ENCODE measurements at regions of chr7 and their contacts with region 1.

Region 1: DNA sequence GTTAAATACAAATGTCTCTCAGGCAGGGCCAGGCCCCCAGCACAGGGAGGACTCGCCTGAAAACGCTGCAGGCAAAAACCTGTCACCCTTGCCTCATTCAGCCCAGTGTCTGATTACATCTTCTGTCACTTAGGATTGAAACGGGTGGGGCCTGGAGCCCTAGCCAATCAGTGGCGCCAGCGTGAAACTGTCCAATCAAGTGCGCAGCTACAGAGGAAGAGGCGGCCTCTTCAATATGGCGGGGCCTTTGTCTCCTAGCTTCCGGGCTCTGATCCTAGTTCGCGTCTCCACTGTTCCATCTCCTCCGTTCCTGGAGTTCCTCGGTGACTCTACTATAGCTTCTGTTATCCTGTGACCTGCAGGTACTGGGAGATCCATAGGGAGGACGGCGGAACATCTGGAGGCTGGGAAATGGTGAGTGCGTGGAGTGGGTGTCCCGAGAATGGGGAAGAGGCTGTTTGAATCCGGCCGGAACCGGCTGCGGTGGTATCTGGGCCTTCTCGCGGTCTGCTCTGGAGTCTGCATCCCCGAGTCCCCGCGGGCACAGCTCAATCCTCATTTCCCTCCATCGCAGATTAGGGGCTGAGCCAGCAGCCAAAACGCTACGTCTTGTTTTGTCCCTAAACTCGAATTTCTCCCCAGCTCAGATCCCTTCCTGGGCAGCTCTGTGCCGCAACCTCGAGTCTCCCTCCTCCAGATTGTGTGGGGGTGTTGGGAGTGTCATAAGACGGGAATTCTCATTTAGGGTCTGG is at the start of gene ZNF736:
- DNase-seq: peak; percentile 89
- H3K4me3 ChIP-seq: peak within 1 kb of the TSS; percentile 56 to 63
- H3K27ac ChIP-seq: peak within 1 kb of the TSS; percentile 66 to 78
- H3K4me1 ChIP-seq: no peaks in the 10 kb centered on the region
- H3K27me3 ChIP-seq: no peaks in the 10 kb centered on the region
- CTCF ChIP-seq: no peak
- POLR2A ChIP-seq: peak; percentile 58
- total RNA-seq, gene ZNF736: 12.4 to 23.4 TPM

Region 2: DNA sequence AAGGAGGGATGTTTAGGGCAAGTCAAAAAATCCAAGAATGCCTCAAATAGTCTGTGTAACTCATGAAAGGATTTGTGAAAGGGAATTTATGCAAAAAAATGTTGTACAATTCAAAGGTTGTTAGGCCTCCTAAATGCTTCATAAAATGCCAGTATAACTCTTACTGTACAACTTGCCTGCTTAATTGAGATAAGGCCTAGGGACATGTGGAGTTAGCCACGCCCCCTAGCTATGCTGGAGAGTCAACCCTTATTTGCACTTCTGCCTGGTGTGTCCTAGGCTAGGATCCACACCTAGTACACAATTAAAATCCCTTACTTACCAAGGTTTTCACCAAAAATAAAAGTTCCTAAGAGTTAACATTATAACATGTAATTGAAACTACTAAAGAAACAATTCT is 171.7 kb after region 1 on chr7:
- intact Hi-C with region 1: no loop called
- DNase-seq: no peak
- H3K4me3 ChIP-seq: no peak overlapping the region
- H3K27ac ChIP-seq: no peak overlapping the region
- H3K4me1 ChIP-seq: no peaks in the 10 kb centered on the region
- H3K27me3 ChIP-seq: no peaks in the 10 kb centered on the region
- CTCF ChIP-seq: no peak
- POLR2A ChIP-seq: no peak

Region 3: DNA sequence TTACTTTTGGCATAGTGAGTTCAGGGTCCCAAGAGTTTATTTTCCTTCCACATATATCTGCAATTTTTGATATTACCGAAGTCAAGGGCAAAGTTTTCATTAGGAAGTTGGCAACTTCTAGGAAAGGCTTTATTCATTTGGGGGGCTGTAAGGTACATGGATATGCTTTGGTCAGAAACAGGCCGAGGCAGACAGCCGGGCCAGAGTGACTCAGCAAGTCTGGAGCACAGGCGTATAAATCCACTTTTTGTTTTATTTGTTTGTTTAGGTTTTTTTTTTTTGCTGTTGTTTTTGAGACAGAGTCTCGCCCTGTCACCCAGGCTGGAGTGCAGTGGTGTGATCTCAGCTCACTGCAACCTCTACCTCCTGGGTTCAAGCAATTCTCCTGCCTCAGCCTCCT is 245.3 kb after region 1 on chr7:
- intact Hi-C with region 1: loop called (anchors 5 kb)
- DNase-seq: peak; percentile 46
- H3K4me3 ChIP-seq: no peak overlapping the region
- H3K27ac ChIP-seq: peak overlapping the region; percentile 35 to 67
- H3K4me1 ChIP-seq: no peaks in the 10 kb centered on the region
- H3K27me3 ChIP-seq: no peaks in the 10 kb centered on the region
- CTCF ChIP-seq: no peak
- POLR2A ChIP-seq: no peak

Region 4: GRCh38 chr7:64665980-64666662 is 352.2 kb after region 1 on chr7 and contains the start of gene ZNF107:
- intact Hi-C with region 1: loop called (anchors 10 kb)
- DNase-seq: peak; percentile 95
- H3K4me3 ChIP-seq: peak within 1 kb of the TSS; percentile 70 to 71
- H3K27ac ChIP-seq: peak within 1 kb of the TSS; percentile 70 to 75
- H3K4me1 ChIP-seq: no peaks in the 10 kb centered on the region
- H3K27me3 ChIP-seq: no peaks in the 10 kb centered on the region
- CTCF ChIP-seq: no peak
- POLR2A ChIP-seq: peak; percentile 63
- total RNA-seq, gene ZNF107: 9.0 to 9.7 TPM